ENCODE measurements at regions of chr6 and their contacts with region 1.

Region 1: GRCh38 chr6:79869600-79870084 is 77.7 kb downstream of the ELOVL4 start:
- DNase-seq: peak; percentile 87
- CTCF ChIP-seq: peak; percentile 94

Region 2: GRCh38 chr6:79777713-79778579 is 91.7 kb before region 1 on chr6:
- CTCF ChIA-PET with region 1: interaction called, 33 read pairs
- POLR2A ChIA-PET with region 1: no interaction called
- DNase-seq: peak; percentile 93
- CTCF ChIP-seq: peak; percentile 98

Region 3: DNA sequence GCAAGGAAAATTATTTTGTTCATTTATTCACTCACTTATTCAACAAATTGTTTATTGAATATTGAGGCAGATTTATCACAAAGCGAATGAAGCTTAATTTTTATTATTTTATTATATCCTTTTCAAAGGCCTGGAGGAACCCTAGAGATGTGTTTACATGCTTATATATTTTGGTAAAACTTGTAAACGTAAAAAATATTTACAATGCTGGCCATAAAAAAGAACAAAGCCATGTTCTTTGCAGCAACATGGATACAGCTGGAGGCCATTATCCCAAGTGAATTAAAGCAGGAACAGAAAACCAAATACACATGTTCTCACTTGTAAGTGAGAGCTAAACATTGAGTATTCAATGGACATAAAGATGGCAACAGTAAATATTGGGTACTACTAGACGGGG is 18.9 kb after region 1 on chr6:
- CTCF ChIA-PET with region 1: interaction called, 10 read pairs
- POLR2A ChIA-PET with region 1: no interaction called
- DNase-seq: no peak
- CTCF ChIP-seq: no peak